Esophagus muscularis mucosa (tissue), 4 donors: ENCODE measurements at regions of chrX and their contacts with region 1.

Region 1: DNA sequence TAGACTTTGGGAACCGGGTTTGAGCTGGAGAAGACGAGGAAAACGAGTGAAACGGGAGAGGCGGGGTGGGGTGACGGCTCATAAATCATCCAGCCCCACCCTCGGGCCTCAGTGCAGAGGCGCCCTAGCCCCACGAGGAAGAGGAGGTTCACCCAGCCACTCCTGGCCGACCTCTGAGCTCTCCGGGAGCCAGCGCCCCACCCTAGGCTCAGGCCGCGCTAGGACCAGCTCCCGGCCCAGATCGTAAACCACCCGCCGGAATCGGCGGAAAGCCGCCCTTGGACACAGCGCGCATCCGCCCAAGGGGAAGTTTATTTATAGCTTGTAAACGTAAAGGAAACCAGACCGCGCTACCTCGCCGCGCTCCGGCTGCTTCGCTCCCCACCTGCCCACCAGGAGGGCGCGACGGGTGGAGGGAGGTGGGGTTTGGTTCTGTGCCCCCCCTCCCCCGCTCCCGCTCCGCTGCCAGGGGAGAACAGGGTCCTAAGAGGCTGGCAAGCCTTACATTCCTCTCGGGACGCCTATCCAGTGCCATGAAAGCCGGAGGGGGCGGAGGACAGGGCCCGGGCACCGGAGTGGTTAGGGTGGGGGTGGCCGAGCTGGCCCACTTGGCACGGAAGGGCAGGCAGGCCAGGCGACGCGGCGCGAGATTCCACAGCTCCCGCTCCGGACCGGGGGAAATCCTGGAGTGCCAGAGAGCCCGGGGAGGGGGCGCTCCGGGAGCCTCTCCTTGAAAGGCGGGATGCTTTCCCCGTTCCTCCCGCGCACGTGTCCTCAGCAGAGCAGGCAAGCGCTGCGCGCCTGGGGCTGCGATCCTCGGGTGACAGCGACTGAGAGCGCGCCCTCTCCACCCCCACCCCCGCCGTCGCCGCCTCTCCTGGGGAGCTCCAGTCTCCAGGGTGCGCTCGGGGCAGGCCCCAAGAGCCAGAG is 84.2 kb downstream of the BCOR start:
- DNase-seq: peak; percentile 91
- H3K4me3 ChIP-seq: peak overlapping the region; percentile 56 to 70 (median 61)
- H3K27ac ChIP-seq: peak overlapping the region; percentile 83 to 92 (median 91)
- H3K4me1 ChIP-seq: peaks cover 16 to 55% (median 35%) of the 10 kb centered on the region in 4 donors
- H3K27me3 ChIP-seq: peaks cover 0 to 19% (median 2%) of the 10 kb centered on the region in 4 donors
- CTCF ChIP-seq: no peak
- EP300 ChIP-seq: no peak
- POLR2A ChIP-seq: no peak

Region 2: DNA sequence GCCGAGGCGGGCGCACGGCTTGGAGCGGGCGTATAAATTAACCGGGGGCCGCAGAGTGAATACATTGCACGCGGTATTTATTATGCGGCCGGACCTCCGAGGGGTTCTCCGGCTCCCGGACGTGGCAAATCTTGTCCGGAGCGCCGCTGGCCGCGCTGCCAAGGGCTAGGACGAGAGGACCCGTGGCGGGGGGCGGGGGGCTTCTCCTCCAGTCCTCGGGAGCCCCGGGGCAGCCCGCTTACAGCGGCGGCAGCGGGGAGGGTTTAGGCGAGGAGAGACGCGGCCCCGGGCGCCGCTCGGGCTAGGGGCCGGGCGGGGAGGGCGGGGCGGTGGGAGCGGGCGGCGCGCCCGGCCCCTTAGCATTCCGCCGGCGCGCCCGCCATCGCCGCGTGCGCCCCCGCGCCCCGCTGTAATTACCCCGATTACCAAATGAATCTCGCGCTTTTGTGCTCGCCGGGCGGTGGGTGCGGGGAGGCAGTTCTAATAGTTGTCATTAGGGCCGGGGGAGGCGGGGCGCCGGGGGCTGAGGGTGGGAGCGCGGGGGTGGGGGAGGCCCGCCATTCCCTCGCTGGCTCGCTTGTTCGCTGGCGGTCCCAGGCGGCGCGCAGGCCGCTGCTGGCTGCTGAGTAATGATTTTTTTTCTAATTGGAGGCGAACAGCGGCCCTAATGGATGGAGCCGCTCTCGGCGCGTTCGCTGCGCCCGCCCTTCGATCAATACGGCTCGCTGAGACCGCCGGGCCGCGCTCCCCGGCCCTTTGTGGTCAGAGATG is 192.4 kb before region 1 on chrX:
- intact Hi-C with region 1: loop called (anchors 10 kb)
- DNase-seq: no peak
- H3K4me3 ChIP-seq: peak overlapping the region; percentile 50 to 62 (median 54)
- H3K27ac ChIP-seq: no peak overlapping the region
- H3K4me1 ChIP-seq: peaks cover 4 to 19% (median 11%) of the 10 kb centered on the region in 4 donors
- H3K27me3 ChIP-seq: peaks cover 0 to 6% (median 0%) of the 10 kb centered on the region in 4 donors
- CTCF ChIP-seq: no peak
- EP300 ChIP-seq: no peak
- POLR2A ChIP-seq: no peak

Region 3: DNA sequence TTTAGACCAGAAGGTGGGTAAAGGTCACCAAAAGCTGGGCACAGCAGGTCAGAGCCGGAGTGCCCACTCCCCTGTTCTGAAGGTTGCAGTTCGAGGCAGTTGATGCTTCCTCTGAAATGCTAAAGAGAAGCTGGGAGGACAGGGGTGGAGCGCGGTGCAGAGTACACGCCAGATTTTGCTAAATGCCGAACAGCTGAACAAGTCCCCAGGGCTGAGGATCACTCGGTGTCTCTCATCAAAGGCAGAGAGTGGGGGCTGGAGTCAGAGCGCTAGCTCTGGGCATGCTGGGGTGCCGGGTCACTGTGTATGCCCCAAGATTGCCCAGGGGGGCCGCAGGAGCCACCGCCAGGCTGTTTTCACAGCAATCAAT is 112.7 kb before region 1 on chrX:
- intact Hi-C with region 1: loop called (anchors 5 kb)
- DNase-seq: no peak
- H3K4me3 ChIP-seq: no peak overlapping the region
- H3K27ac ChIP-seq: no peak overlapping the region
- H3K4me1 ChIP-seq: peaks cover 11 to 35% (median 22%) of the 10 kb centered on the region in 4 donors
- H3K27me3 ChIP-seq: no peaks in the 10 kb centered on the region
- CTCF ChIP-seq: no peak
- EP300 ChIP-seq: no peak
- POLR2A ChIP-seq: no peak

Region 4: GRCh38 chrX:40085102-40085551 is 71.6 kb after region 1 on chrX:
- intact Hi-C with region 1: loop called (anchors 5 kb)
- DNase-seq: no peak
- H3K4me3 ChIP-seq: no peak overlapping the region
- H3K27ac ChIP-seq: no peak overlapping the region
- H3K4me1 ChIP-seq: peaks cover 38 to 93% (median 90%) of the 10 kb centered on the region in 4 donors
- H3K27me3 ChIP-seq: peaks cover 0 to 13% (median 0%) of the 10 kb centered on the region in 4 donors
- CTCF ChIP-seq: no peak
- EP300 ChIP-seq: no peak
- POLR2A ChIP-seq: no peak